SK-N-SH (cell line): ENCODE measurements at regions of chr16 and their contacts with region 1.

Region 1: DNA sequence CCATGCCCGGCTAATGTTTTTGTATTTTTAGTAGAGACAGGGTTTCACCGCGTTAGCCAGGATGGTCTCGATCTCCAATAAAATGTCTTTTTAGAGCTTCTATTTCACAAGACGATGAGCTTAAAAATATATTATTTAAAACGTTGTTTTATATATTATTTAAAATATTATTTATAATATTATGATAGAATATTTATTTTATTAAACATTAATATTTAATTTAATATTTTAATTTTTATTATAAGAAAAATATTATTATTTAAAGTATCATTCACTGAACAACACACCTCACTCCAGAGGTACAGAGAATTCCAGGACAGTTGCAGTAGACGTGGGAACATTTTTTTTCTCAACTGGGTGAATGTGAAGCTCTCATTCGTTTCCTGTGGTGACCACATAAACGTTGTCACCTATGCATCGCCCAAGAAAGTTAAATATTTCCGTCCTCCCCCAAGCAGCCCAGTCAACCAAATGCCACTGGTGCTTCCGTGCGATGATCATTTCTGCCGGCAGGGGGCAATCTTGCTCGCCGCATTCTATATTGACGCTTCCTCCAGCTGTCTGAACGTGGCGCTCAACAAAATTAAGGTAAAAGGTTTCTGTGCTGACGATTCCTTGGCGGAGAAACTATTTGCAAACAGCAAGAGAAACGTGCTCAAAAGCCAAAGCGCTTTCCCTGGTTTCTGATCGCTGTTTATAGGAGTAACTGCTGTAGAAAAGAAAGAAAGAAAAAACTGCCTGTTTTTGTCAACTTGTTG is 41.7 kb upstream of the PRSS54 start:
- DNase-seq: peak; percentile 73
- H3K4me3 ChIP-seq: peak overlapping the region in 1 of 2 experiments; percentile 31; a peak in 1 of 4 replicates
- H3K27ac ChIP-seq: no peak overlapping the region
- H3K4me1 ChIP-seq: no peaks in the 10 kb centered on the region; a peak in 2 of 4 replicates
- H3K27me3 ChIP-seq: no peaks in the 10 kb centered on the region
- CTCF ChIP-seq: peak; percentile 94
- EP300 ChIP-seq: no peak
- RAD21 ChIP-seq: peak; percentile 94

Region 2: GRCh38 chr16:58317608-58318152 is 18.8 kb before region 1 on chr16:
- CTCF ChIA-PET with region 1: interaction called, 32 read pairs
- POLR2A ChIA-PET with region 1: interaction called, 3 read pairs
- DNase-seq: no peak
- H3K4me3 ChIP-seq: no peak overlapping the region
- H3K27ac ChIP-seq: no peak overlapping the region
- H3K4me1 ChIP-seq: no peaks in the 10 kb centered on the region; a peak in 1 of 4 replicates
- H3K27me3 ChIP-seq: no peaks in the 10 kb centered on the region
- CTCF ChIP-seq: no peak
- EP300 ChIP-seq: no peak
- RAD21 ChIP-seq: no peak

Region 3: DNA sequence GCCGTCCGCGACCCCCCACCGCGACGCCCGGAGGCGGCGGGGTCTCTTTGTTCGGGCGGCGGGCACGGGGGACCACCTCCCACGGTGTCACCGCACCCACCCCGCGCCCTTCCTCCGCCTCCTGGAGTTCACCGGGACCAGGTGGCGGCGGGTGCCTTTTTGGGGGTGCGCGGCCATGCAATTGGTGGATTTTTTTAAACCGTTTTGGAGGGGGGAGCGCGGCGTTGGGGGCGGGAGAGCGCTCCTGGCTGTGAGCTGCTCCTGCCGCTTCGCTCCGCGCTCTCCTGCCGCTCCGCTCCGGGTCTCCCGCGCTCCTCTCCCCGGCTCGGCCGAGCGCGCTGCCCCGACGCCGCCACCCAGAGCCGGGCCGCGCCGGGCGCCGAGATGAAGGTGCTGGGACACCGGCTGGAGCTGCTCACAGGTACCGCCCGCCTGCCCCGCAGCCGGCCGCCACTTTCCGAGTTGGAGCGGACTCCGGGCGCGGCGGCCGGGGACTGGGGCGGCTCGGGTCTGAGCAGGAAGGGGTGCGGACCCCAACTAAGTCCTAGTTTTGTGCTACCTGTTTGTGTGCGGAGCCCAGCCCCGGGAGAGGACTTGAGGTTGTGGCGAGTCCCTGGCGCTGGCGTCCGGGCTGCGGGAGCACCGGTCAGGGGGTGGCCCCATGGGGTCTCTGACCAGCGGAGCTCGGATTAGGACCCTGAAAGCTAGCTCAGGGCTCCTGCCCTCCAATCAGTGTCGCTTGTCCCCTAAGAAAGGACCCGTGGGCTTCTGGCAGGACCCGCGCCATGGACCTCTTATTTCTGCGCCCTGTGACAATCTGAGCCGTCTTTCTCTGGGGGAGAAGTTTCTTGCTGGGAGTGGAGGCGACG is 127.8 kb after region 1 on chr16:
- CTCF ChIA-PET with region 1: interaction called, 24 read pairs
- POLR2A ChIA-PET with region 1: interaction called, 5 read pairs
- DNase-seq: peak; percentile 82
- H3K4me3 ChIP-seq: peak overlapping the region; percentile 49 to 58
- H3K27ac ChIP-seq: no peak overlapping the region
- H3K4me1 ChIP-seq: peaks cover 0 to 5% of the 10 kb centered on the region in 2 experiments; a peak in 1 of 4 replicates
- H3K27me3 ChIP-seq: peaks cover 38% of the 10 kb centered on the region
- CTCF ChIP-seq: no peak
- EP300 ChIP-seq: no peak
- RAD21 ChIP-seq: no peak

Region 4: DNA sequence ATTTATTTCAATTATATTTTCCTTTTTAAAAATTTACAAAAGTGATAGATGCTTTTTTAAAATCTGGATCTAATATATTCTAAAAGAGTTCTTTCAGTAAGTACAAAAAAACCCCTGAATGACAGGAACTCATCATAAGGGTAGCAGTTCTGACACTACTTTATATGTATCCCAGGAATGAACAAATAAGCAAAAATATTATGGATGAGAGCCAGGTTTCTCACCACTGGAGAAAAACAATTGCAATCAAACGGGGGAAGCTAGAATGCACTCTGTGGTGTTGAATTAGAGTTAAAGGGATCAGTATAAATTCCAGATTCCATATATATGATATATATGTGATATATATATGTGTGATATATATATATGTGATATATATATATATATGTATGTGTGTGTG is 140.3 kb after region 1 on chr16:
- CTCF ChIA-PET with region 1: interaction called, 24 read pairs
- POLR2A ChIA-PET with region 1: no interaction called
- DNase-seq: no peak
- H3K4me3 ChIP-seq: no peak overlapping the region
- H3K27ac ChIP-seq: no peak overlapping the region
- H3K4me1 ChIP-seq: no peaks in the 10 kb centered on the region
- H3K27me3 ChIP-seq: no peaks in the 10 kb centered on the region
- CTCF ChIP-seq: no peak
- EP300 ChIP-seq: no peak
- RAD21 ChIP-seq: no peak

Region 5: DNA sequence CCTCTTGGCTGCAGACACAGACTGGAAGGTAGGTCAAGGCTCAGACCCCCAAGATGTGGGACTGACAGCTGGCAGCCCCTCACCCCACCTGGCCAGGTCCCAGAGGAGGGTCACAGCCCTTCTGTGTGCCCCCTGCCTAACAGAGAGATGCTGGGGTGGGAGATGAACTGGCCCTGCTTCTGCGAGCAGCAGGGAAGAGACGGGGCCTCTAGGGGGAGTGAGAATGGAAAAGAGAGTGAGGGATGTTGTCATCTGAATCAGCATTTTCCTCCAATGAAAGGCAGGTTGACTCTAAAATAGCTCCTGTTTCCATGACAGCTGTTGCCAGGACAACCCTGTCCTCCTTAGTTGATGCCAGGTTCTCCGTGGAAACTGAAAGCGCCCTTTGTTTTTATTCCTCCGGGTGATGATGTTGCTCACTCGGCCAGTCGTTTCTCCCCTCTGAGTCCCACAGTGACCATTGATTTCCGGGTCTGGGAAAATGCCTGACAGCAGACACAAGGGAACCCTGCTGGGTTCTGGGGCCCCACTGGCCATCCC is 158.5 kb after region 1 on chr16:
- CTCF ChIA-PET with region 1: interaction called, 542 read pairs
- POLR2A ChIA-PET with region 1: interaction called, 4 read pairs
- DNase-seq: peak; percentile 93
- H3K4me3 ChIP-seq: peak overlapping the region; percentile 23 to 34; a peak in 2 of 4 replicates
- H3K27ac ChIP-seq: peak overlapping the region; percentile 86 to 97
- H3K4me1 ChIP-seq: peaks cover 6 to 37% of the 10 kb centered on the region in 2 experiments; a peak in 2 of 4 replicates
- H3K27me3 ChIP-seq: no peaks in the 10 kb centered on the region
- CTCF ChIP-seq: peak; percentile 69
- EP300 ChIP-seq: peak; percentile 17 to 38; a peak in 2 of 4 replicates
- RAD21 ChIP-seq: peak; percentile 43

Region 6: GRCh38 chr16:58661199-58661830 is 324.8 kb after region 1 on chr16:
- CTCF ChIA-PET with region 1: interaction called, 14 read pairs
- POLR2A ChIA-PET with region 1: no interaction called
- DNase-seq: peak; percentile 78
- H3K4me3 ChIP-seq: no peak overlapping the region; a peak in 1 of 4 replicates
- H3K27ac ChIP-seq: no peak overlapping the region
- H3K4me1 ChIP-seq: peaks cover 3 to 18% of the 10 kb centered on the region in 2 experiments; a peak in 1 of 4 replicates
- H3K27me3 ChIP-seq: no peaks in the 10 kb centered on the region
- CTCF ChIP-seq: peak; percentile 78
- EP300 ChIP-seq: no peak
- RAD21 ChIP-seq: peak; percentile 98